ENCODE measurements at regions of chr14 and their contacts with region 1.

Region 1: GRCh38 chr14:93137864-93138263 is 22.1 kb upstream of the ITPK1 start:
- DNase-seq: peak; percentile 78
- H3K4me3 ChIP-seq: no peak overlapping the region
- H3K27ac ChIP-seq: no peak overlapping the region
- H3K4me1 ChIP-seq: peaks cover 0 to 6% (median 0%) of the 10 kb centered on the region in 4 donors
- H3K27me3 ChIP-seq: no peaks in the 10 kb centered on the region
- CTCF ChIP-seq: no peak
- EP300 ChIP-seq: no peak
- POLR2A ChIP-seq: no peak

Region 2: GRCh38 chr14:92951912-92952471 is 185.9 kb before region 1 on chr14:
- intact Hi-C with region 1: loop called (anchors 1 kb)
- DNase-seq: peak; percentile 87
- H3K4me3 ChIP-seq: no peak overlapping the region
- H3K27ac ChIP-seq: peak overlapping the region; percentile 21 to 41 (median 28)
- H3K4me1 ChIP-seq: peaks cover 0 to 11% (median 5%) of the 10 kb centered on the region in 4 donors
- H3K27me3 ChIP-seq: no peaks in the 10 kb centered on the region
- CTCF ChIP-seq: peak; percentile 89 to 98 (median 92)
- EP300 ChIP-seq: no peak
- POLR2A ChIP-seq: no peak